Naive thymus-derived CD4-positive, alpha-beta T cell (primary cell): ENCODE measurements at regions of chr4 and their contacts with region 1.

Region 1: DNA sequence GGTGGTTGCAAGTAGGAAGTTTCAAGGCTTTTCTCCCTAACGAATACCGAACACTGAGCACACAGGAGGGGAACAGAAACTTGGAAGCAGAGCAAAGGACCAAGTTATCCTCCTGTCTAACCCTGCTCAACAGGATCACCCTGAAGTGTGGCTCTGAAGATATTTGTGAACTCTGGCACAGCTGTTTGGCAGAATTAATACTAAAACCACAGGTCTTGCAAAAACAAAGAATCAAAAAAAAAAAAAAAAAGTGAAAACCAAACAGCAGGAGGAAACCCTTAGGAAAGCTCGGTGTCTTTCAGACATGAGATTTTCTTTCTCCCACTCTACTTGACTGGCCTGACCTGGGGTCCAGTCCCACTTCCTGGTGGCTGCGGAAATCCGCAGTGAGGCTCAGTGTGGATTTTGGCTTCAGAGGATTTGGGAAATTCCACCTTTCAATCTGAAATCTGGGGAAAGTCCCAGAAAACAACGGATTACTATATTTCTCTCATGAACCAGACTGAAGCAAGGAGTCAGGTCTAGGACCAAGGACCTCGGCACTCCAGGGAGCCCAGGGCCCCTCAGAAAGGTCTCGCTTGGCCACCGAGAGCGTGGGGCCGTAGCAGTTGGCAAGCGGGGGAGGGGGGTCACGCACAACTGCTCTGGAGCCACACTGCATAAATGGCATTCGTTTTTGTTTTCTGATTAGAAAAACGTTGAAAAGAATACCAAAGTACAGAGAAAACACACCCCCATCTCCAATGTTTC is 867 bp downstream of the TIFA start:
- DNase-seq: no peak
- ATAC-seq: no peak
- H3K4me3 ChIP-seq: peak overlapping the region; percentile 94
- H3K4me3 Mint-ChIP-seq: peak overlapping the region; percentile 87 to 97 (median 92)
- H3K27ac ChIP-seq: peak overlapping the region; percentile 81
- H3K27ac Mint-ChIP-seq: peak overlapping the region; percentile 81 to 95 (median 91)
- H3K4me1 ChIP-seq: peaks cover 31 to 54% of the 10 kb centered on the region in 2 donors
- H3K4me1 Mint-ChIP-seq: peaks cover 47 to 88% (median 83%) of the 10 kb centered on the region in 7 donors
- H3K27me3 ChIP-seq: no peaks in the 10 kb centered on the region
- H3K27me3 Mint-ChIP-seq: no peaks in the 10 kb centered on the region

Region 2: DNA sequence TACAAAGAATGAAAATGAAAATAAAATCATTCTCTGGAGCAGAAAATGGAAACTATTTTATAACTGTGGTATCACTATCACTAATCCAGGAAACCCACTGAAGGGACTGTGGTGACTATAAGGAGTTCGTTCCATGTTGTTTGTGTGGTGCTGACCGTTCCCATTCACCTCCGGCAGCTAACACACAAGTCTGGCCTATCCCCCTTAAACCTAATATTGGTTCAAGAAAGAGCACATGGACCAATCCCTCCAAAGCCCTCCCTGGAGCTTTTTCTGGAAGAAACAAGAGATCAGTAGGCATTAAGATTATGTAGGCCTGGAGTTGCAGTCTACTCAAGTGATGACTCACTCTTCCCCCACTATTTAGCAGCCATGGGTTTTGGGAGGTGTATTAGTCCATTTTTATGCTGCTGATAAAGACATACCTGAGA is 165.5 kb before region 1 on chr4:
- CTCF ChIA-PET with region 1: no interaction called
- POLR2A ChIA-PET with region 1: no interaction called
- intact Hi-C with region 1: loop called in 1 of 2 experiments (anchors 2 kb)
- DNase-seq: peak in 1 of 9 donors; percentile 41
- ATAC-seq: no peak
- H3K4me3 ChIP-seq: no peak overlapping the region
- H3K4me3 Mint-ChIP-seq: peak overlapping the region in 1 of 10 donors; percentile 65
- H3K27ac ChIP-seq: no peak overlapping the region
- H3K27ac Mint-ChIP-seq: peak overlapping the region in 1 of 9 donors; percentile 94
- H3K4me1 ChIP-seq: no peaks in the 10 kb centered on the region
- H3K4me1 Mint-ChIP-seq: peaks cover 2 to 17% (median 11%) of the 10 kb centered on the region in 7 donors
- H3K27me3 ChIP-seq: no peaks in the 10 kb centered on the region
- H3K27me3 Mint-ChIP-seq: peaks cover 0 to 14% (median 6%) of the 10 kb centered on the region in 5 donors

Region 3: GRCh38 chr4:112266821-112267220 is 18.0 kb before region 1 on chr4:
- CTCF ChIA-PET with region 1: interaction called, 5 read pairs
- POLR2A ChIA-PET with region 1: interaction called, 6 read pairs
- intact Hi-C with region 1: loop called in 1 of 2 experiments (anchors 1 kb)
- DNase-seq: peak in 2 of 9 donors; percentile 11 to 24
- ATAC-seq: peak; percentile 45
- H3K4me3 ChIP-seq: no peak overlapping the region
- H3K4me3 Mint-ChIP-seq: no peak overlapping the region
- H3K27ac ChIP-seq: no peak overlapping the region
- H3K27ac Mint-ChIP-seq: peak overlapping the region in 1 of 9 donors; percentile 22
- H3K4me1 ChIP-seq: no peaks in the 10 kb centered on the region
- H3K4me1 Mint-ChIP-seq: peaks cover 0 to 17% (median 0%) of the 10 kb centered on the region in 7 donors
- H3K27me3 ChIP-seq: no peaks in the 10 kb centered on the region
- H3K27me3 Mint-ChIP-seq: no peaks in the 10 kb centered on the region

Region 4: GRCh38 chr4:112296949-112297880 is 12.4 kb after region 1 on chr4 and contains the start of gene ALPK1:
- CTCF ChIA-PET with region 1: interaction called, 6 read pairs
- POLR2A ChIA-PET with region 1: interaction called, 65 read pairs
- intact Hi-C with region 1: loop called (anchors 1 kb)
- DNase-seq: peak in 6 of 9 donors; percentile 26 to 58 (median 40)
- ATAC-seq: peak; percentile 92
- H3K4me3 ChIP-seq: peak within 1 kb of the TSS; percentile 22
- H3K4me3 Mint-ChIP-seq: peak within 1 kb of the TSS; percentile 75 to 91 (median 88)
- H3K27ac ChIP-seq: peak within 1 kb of the TSS; percentile 62
- H3K27ac Mint-ChIP-seq: peak within 1 kb of the TSS; percentile 75 to 97 (median 91)
- H3K4me1 ChIP-seq: peaks cover 4 to 35% of the 10 kb centered on the region in 2 donors
- H3K4me1 Mint-ChIP-seq: peaks cover 12 to 34% (median 30%) of the 10 kb centered on the region in 7 donors
- H3K27me3 ChIP-seq: no peaks in the 10 kb centered on the region
- H3K27me3 Mint-ChIP-seq: no peaks in the 10 kb centered on the region
- total RNA-seq, gene ALPK1: 15.5 to 35.0 (median 19.8) TPM

Region 5: GRCh38 chr4:112302320-112303274 is 17.8 kb after region 1 on chr4:
- CTCF ChIA-PET with region 1: interaction called, 6 read pairs
- POLR2A ChIA-PET with region 1: interaction called, 65 read pairs
- intact Hi-C with region 1: loop called (anchors 1 kb)
- DNase-seq: peak in 2 of 9 donors; percentile 30 to 33
- ATAC-seq: peak; percentile 71
- H3K4me3 ChIP-seq: no peak overlapping the region
- H3K4me3 Mint-ChIP-seq: no peak overlapping the region
- H3K27ac ChIP-seq: peak overlapping the region; percentile 52
- H3K27ac Mint-ChIP-seq: no peak overlapping the region
- H3K4me1 ChIP-seq: peaks cover 12 to 40% of the 10 kb centered on the region in 2 donors
- H3K4me1 Mint-ChIP-seq: peaks cover 10 to 35% (median 31%) of the 10 kb centered on the region in 7 donors
- H3K27me3 ChIP-seq: no peaks in the 10 kb centered on the region
- H3K27me3 Mint-ChIP-seq: no peaks in the 10 kb centered on the region

Region 6: DNA sequence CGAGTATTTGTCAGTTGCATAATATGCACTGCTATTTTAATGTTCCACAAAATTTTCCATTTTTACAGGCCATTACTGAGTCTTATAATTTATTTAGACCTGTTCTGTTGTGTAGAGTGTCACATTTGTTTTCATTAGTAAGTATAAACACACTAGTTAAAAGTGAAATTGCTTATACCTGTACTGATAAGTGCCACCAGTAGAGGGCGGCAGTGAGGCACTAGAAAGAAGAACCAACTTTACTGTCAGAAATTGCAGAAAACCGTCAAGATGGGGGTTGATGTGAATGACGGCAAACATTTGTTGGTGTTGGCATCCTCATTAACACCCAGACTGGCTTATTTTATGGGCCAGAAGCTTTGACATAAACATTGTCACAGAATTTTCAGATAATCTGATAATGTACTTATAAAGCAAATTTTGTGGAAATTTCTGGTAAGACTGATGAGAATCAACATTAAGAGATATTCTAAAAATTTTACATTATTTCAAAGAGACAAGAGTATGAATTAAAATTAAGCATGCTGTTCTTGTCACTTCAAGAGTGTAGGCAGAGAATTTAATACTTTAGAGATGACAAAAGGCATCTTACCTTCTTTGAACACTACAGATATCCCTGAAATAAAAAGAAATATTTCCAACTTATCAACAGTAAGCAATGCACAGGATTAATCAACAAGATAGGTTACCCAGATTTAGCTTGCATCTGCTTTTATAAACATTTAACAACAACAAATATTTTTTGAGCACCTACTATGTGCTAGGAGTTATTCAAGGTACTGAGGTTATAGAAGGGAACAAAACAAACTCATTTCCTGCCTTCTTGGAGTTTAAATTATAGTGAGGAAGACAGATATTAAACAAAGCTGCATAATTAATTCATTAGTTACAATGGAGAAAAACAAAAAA is 37.2 kb after region 1 on chr4:
- CTCF ChIA-PET with region 1: interaction called, 4 read pairs
- POLR2A ChIA-PET with region 1: interaction called, 7 read pairs
- intact Hi-C with region 1: loop called (anchors 1 kb)
- DNase-seq: peak; percentile 44 to 74 (median 71)
- ATAC-seq: peak; percentile 96
- H3K4me3 ChIP-seq: no peak overlapping the region
- H3K4me3 Mint-ChIP-seq: peak overlapping the region in 7 of 10 donors; percentile 27 to 75 (median 62)
- H3K27ac ChIP-seq: no peak overlapping the region
- H3K27ac Mint-ChIP-seq: peak overlapping the region in 3 of 9 donors; percentile 15 to 59 (median 38)
- H3K4me1 ChIP-seq: no peaks in the 10 kb centered on the region
- H3K4me1 Mint-ChIP-seq: peaks cover 10 to 34% (median 14%) of the 10 kb centered on the region in 7 donors
- H3K27me3 ChIP-seq: no peaks in the 10 kb centered on the region
- H3K27me3 Mint-ChIP-seq: no peaks in the 10 kb centered on the region

Region 7: GRCh38 chr4:112370466-112370865 is 85.6 kb after region 1 on chr4:
- CTCF ChIA-PET with region 1: no interaction called
- POLR2A ChIA-PET with region 1: no interaction called
- intact Hi-C with region 1: no loop called
- DNase-seq: no peak
- ATAC-seq: no peak
- H3K4me3 ChIP-seq: no peak overlapping the region
- H3K4me3 Mint-ChIP-seq: no peak overlapping the region
- H3K27ac ChIP-seq: no peak overlapping the region
- H3K27ac Mint-ChIP-seq: no peak overlapping the region
- H3K4me1 ChIP-seq: no peaks in the 10 kb centered on the region
- H3K4me1 Mint-ChIP-seq: peaks cover 0 to 3% (median 0%) of the 10 kb centered on the region in 7 donors
- H3K27me3 ChIP-seq: no peaks in the 10 kb centered on the region
- H3K27me3 Mint-ChIP-seq: no peaks in the 10 kb centered on the region

Region 8: GRCh38 chr4:112509243-112510141 is 224.7 kb after region 1 on chr4:
- CTCF ChIA-PET with region 1: no interaction called
- POLR2A ChIA-PET with region 1: no interaction called
- intact Hi-C with region 1: loop called in 1 of 2 experiments (anchors 1 kb)
- DNase-seq: no peak
- ATAC-seq: no peak
- H3K4me3 ChIP-seq: no peak overlapping the region
- H3K4me3 Mint-ChIP-seq: peak overlapping the region; percentile 54 to 85 (median 68)
- H3K27ac ChIP-seq: no peak overlapping the region
- H3K27ac Mint-ChIP-seq: peak overlapping the region in 1 of 9 donors; percentile 56
- H3K4me1 ChIP-seq: peaks cover 9 to 27% of the 10 kb centered on the region in 2 donors
- H3K4me1 Mint-ChIP-seq: peaks cover 23 to 43% (median 38%) of the 10 kb centered on the region in 7 donors
- H3K27me3 ChIP-seq: peaks cover 10 to 55% of the 10 kb centered on the region in 2 donors
- H3K27me3 Mint-ChIP-seq: peaks cover 85 to 95% (median 89%) of the 10 kb centered on the region in 5 donors

Region 9: GRCh38 chr4:112552668-112553067 is 267.8 kb after region 1 on chr4:
- CTCF ChIA-PET with region 1: no interaction called
- POLR2A ChIA-PET with region 1: no interaction called
- intact Hi-C with region 1: no loop called
- DNase-seq: no peak
- ATAC-seq: no peak
- H3K4me3 ChIP-seq: no peak overlapping the region
- H3K4me3 Mint-ChIP-seq: no peak overlapping the region
- H3K27ac ChIP-seq: no peak overlapping the region
- H3K27ac Mint-ChIP-seq: no peak overlapping the region
- H3K4me1 ChIP-seq: no peaks in the 10 kb centered on the region
- H3K4me1 Mint-ChIP-seq: no peaks in the 10 kb centered on the region
- H3K27me3 ChIP-seq: no peaks in the 10 kb centered on the region
- H3K27me3 Mint-ChIP-seq: no peaks in the 10 kb centered on the region